BJ (cell line): ENCODE measurements at regions of chr12 and their contacts with region 1.

Region 1: DNA sequence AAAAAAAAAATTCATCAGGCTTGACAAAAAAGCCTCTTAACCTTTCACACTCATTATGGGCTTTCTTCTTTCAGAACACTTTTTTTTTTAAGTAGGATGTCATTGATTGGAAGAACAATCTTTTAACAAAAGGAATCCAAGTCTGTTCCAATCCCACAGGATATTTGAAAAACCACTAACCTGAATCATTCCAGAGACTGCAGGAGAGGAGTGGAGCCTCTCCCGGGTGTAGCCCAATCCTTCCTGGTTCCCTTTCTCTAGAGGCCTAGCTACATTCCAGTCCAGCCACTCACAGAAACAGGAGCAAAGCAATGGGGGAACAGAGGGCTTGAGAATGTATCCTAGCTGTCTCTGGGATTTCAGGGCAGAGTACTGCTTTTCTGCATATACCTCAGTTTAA is 4.3 kb downstream of the MFAP5 start:
- DNase-seq: peak; percentile 57
- H3K4me3 ChIP-seq: no peak overlapping the region
- H3K27me3 ChIP-seq: no peaks in the 10 kb centered on the region
- CTCF ChIP-seq: no peak

Region 2: DNA sequence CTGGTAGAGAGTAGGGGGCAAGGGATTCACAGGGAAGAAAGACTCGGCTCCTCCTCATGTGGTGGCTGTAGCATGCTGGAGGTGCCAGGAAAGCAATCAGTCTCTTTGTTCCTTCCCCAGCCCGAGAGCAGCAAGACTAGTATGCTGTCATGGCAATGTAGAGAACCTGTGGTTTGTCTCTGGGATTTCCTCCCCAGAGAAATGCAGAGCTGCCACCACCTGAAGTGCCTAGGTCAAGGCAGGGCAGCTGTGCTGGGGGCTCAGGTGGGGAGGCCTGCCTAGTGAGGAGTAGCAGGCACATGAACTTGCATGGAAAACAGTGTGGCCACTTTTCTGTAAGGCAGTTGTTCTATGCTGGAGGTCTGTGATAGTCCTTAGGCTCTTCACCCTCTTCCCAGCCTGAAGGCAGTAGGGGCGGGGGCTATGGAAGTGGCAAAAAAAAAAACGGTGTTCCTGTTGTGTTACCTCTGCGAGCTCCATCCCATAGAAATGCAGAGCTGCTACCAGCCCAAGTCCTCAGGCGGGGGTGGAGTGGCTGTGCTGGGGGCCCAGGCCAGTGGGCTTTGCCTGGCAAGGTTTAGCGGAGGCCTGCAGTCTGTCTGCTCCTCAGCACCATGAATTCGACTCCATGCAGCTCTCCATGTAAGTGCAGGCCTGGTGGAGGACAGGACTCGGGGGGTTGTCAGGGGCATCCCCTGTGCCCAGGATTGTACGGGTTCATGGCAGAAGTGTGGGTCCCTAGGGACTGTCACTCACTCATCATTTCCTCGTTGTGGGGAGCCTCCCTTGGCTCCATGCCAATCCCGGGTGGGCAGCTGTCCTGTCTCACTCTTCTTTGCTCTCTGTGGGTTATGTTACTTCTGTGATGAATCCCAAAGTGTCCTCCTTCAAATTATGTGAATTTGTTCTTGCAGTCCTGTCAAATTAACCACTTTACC is 149.2 kb before region 1 on chr12:
- CTCF ChIA-PET with region 1: no interaction called
- POLR2A ChIA-PET with region 1: no interaction called
- DNase-seq: no peak
- H3K4me3 ChIP-seq: no peak overlapping the region
- H3K27me3 ChIP-seq: no peaks in the 10 kb centered on the region
- CTCF ChIP-seq: no peak

Region 3: GRCh38 chr12:8675591-8676036 is 17.3 kb after region 1 on chr12:
- CTCF ChIA-PET with region 1: interaction called, 10 read pairs
- POLR2A ChIA-PET with region 1: no interaction called
- DNase-seq: no peak
- H3K4me3 ChIP-seq: no peak overlapping the region
- H3K27me3 ChIP-seq: no peaks in the 10 kb centered on the region
- CTCF ChIP-seq: no peak

Region 4: GRCh38 chr12:8823565-8824300 is 165.4 kb after region 1 on chr12:
- CTCF ChIA-PET with region 1: interaction called, 10 read pairs
- POLR2A ChIA-PET with region 1: no interaction called
- DNase-seq: no peak
- H3K4me3 ChIP-seq: no peak overlapping the region
- H3K27me3 ChIP-seq: no peaks in the 10 kb centered on the region
- CTCF ChIP-seq: peak; percentile 67

Region 5: GRCh38 chr12:8860165-8860961 is 202.0 kb after region 1 on chr12:
- CTCF ChIA-PET with region 1: interaction called, 17 read pairs
- POLR2A ChIA-PET with region 1: no interaction called
- DNase-seq: no peak
- H3K4me3 ChIP-seq: no peak overlapping the region
- H3K27me3 ChIP-seq: no peaks in the 10 kb centered on the region
- CTCF ChIP-seq: peak; percentile 70

Region 6: GRCh38 chr12:9049520-9050133 is 391.3 kb after region 1 on chr12:
- CTCF ChIA-PET with region 1: interaction called, 12 read pairs
- POLR2A ChIA-PET with region 1: no interaction called
- DNase-seq: no peak
- H3K4me3 ChIP-seq: no peak overlapping the region
- H3K27me3 ChIP-seq: peaks cover 5% of the 10 kb centered on the region
- CTCF ChIP-seq: peak; percentile 53